Endothelial cell of umbilical vein (primary cell): ENCODE measurements at regions of chr4 and their contacts with region 1.

Region 1: DNA sequence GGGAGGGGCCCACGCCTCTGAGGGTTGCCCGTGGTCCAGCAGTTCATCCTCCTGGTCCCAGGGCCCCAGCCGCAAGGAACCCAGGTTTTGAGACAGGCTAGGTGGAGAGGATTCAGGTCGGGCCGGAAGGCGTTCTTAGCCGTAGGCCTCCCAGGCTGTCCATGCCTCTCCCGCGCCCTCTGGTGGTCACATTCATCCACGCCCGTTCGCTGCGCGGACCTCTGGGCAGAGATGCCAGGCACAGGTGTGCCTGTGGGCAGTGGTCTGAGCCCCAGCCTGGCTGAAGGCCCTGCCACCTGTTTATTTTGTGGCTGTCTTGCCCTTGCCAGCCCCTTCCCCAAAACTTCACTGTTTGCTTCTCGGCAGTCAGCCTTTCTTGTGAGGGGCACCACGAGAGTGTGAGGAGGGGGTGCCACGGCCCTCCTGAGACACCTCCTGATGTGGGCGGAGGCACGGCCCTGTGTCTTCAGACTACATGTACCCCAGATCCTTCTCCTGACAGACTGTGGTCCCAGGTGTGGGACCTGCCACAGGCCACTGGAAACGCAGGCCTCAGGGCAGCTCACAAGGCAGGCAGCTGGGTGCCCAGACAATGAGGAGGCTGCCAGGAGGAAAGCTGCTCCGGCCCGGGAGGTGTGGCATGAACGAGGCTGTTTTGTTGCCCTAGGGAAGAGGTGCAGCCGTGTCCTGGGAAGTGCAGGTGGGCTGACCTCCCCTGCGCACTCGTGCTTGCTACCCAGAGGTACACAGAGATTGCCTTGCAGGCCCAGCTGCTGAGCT is 5.0 kb downstream of the UVSSA start:
- DNase-seq: peak; percentile 63
- H3K4me3 ChIP-seq: no peak overlapping the region
- H3K27ac ChIP-seq: no peak overlapping the region
- H3K4me1 ChIP-seq: peaks cover 13% of the 10 kb centered on the region
- H3K27me3 ChIP-seq: no peaks in the 10 kb centered on the region
- CTCF ChIP-seq: peak; percentile 95 to 96
- POLR2A ChIP-seq: no peak

Region 2: DNA sequence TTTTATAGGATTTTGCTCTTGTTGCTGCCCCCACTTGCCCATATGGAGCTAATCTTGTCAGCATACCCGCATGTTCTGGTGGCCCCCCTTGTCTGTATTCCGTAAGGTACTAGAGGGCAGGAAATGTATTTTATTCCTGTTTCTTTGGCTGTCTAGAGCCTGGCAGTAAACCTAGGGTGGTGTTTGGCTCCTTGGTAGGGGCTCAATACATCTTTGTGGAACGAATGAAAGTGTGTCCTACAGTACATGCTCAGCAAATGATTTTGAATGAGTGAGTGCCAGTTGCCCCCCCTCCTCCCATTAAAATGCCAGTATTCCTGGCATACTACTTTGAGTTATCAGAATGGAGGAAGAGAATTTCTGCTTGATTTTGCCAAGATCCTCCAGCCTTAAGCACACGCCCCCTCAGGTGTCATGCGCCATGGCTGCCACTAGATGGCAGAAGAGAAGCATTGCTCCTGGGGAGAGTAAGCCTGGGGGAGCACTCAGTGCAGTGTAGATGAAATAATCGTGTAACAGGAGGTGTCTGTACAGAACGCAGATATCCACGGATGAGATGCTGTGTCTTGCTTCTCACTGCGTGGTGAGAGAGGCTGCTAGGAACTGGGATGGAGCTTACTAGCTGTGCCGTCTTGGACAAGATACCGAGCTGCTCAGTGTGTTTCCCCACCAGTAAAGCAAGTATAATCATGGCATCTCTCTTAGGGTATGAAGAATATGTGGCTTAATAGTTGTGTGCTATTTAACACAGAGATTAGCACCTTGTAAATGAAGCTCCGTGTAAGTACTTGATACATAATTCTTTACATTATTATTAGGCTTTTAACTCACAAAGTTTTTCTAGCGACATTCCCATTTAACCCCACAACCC is 221.5 kb before region 1 on chr4:
- CTCF ChIA-PET with region 1: interaction called, 15 read pairs
- POLR2A ChIA-PET with region 1: no interaction called
- dilution Hi-C with region 1: no loop called
- intact Hi-C with region 1: loop called (anchors 1 kb)
- DNase-seq: peak; percentile 88
- H3K4me3 ChIP-seq: no peak overlapping the region
- H3K27ac ChIP-seq: no peak overlapping the region
- H3K4me1 ChIP-seq: no peaks in the 10 kb centered on the region
- H3K27me3 ChIP-seq: peaks cover 2 to 3% of the 10 kb centered on the region in 2 experiments
- CTCF ChIP-seq: peak; percentile 94 to 98
- POLR2A ChIP-seq: no peak

Region 3: GRCh38 chr4:1200425-1201035 is 151.5 kb before region 1 on chr4:
- CTCF ChIA-PET with region 1: no interaction called
- POLR2A ChIA-PET with region 1: no interaction called
- dilution Hi-C with region 1: no loop called
- intact Hi-C with region 1: no loop called
- DNase-seq: no peak
- H3K4me3 ChIP-seq: no peak overlapping the region
- H3K27ac ChIP-seq: no peak overlapping the region
- H3K4me1 ChIP-seq: no peaks in the 10 kb centered on the region
- H3K27me3 ChIP-seq: no peaks in the 10 kb centered on the region
- CTCF ChIP-seq: no peak
- POLR2A ChIP-seq: no peak

Region 4: DNA sequence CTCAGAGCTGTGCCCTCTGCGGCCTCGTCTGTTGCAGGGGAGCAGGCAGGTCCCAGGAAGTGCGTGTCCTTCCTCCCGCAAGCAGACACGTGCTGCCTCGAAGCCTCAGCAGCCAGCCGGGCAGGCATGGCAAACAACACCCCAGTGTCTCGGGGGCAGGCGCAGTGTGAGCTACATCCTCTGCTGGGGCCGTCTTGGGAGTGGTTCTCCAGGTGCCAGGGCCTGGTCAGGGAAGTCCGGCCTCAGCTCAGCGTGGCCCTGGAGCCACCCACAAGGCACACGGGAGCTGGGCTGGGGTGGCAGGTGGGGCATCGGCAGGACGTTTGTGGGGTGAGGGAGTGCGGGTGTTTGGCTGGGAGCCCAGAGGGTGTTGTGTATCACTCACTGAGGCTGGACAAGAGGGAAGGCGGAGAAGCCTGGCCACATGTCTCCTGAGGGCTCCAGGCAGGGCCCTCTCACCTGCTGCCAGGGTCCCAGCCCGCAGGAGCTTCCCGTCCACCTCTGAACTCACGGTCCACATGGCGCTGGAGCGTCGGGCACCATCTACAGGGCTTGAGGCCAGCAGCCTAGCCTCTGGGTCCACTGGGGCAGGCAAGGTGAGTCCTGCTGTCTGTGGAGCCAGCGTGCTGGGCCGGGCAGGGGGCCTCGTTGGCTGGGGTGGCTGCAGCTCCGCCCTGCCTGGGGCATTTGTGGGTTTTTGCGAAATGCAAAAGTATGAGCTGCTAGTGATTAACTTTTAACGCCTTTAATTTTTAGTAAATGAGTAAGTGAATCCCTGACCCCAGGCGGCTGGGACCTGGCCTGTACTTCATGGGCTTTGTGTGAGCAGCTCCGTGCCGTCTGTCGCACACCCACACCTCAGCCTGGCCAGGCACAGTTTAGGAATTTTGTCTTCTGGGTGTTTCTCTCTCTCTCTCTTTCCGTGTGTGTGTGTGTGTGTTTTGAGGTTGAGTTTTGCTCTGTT is 22.4 kb before region 1 on chr4:
- CTCF ChIA-PET with region 1: no interaction called
- POLR2A ChIA-PET with region 1: no interaction called
- dilution Hi-C with region 1: no loop called
- intact Hi-C with region 1: no loop called
- DNase-seq: no peak
- H3K4me3 ChIP-seq: no peak overlapping the region
- H3K27ac ChIP-seq: no peak overlapping the region
- H3K4me1 ChIP-seq: no peaks in the 10 kb centered on the region
- H3K27me3 ChIP-seq: no peaks in the 10 kb centered on the region
- CTCF ChIP-seq: no peak
- POLR2A ChIP-seq: no peak

Region 5: GRCh38 chr4:1512738-1513660 is 161.0 kb after region 1 on chr4:
- CTCF ChIA-PET with region 1: interaction called, 30 read pairs
- POLR2A ChIA-PET with region 1: no interaction called
- dilution Hi-C with region 1: no loop called
- intact Hi-C with region 1: no loop called
- DNase-seq: peak; percentile 5
- H3K4me3 ChIP-seq: peak overlapping the region in 1 of 3 experiments; percentile 12
- H3K27ac ChIP-seq: no peak overlapping the region
- H3K4me1 ChIP-seq: no peaks in the 10 kb centered on the region
- H3K27me3 ChIP-seq: no peaks in the 10 kb centered on the region
- CTCF ChIP-seq: peak; percentile 60 to 65
- POLR2A ChIP-seq: no peak

Region 6: DNA sequence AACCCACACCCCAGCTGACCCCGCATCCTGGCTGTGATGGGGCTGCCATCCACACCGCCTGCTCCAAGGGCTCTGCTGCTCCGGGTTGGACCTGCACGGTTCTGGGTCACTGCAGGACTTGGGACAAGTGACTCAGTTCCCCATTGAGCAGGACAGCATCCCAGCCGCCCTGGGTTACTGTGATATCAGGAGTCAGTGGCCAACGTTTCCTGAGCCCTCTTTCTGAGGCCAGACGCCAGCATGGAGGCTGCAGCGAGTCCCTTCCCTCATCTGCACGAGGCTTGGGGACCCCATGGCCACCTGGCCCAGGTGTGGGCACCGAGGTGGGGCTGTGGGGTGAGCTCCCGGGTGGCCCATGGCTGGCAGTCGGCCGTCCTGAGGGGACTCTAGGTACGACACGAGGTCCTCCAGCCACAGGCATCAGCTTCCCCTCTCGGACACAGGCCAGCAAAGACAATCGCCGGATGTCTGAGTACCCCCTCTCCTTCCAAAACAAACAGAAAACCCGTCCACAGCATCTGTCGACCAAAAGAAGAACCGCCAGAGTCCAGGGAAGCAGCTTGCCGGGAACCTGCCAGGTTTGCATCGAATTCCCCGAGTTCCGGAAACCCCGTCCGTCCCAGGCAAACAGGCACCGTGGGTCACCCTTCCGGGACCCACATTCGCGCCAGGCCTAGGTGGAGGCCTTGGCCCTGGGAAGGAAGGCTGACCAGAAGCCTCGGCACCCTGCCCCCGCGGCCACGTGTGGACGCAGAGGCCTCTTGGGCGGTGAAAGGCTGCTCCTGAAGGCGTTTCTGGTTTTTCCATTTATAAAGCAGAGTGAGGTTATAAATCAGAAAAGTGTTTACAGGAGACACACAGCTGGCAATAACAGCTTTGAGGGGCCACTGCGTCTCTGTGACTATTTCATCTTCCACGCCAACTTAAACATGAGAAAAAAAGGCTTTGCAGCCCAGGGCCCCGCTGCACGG is 196.1 kb after region 1 on chr4:
- CTCF ChIA-PET with region 1: interaction called, 15 read pairs
- POLR2A ChIA-PET with region 1: no interaction called
- dilution Hi-C with region 1: no loop called
- intact Hi-C with region 1: loop called (anchors 2 kb)
- DNase-seq: peak; percentile 80
- H3K4me3 ChIP-seq: no peak overlapping the region
- H3K27ac ChIP-seq: no peak overlapping the region
- H3K4me1 ChIP-seq: peaks cover 8% of the 10 kb centered on the region
- H3K27me3 ChIP-seq: no peaks in the 10 kb centered on the region
- CTCF ChIP-seq: no peak
- POLR2A ChIP-seq: no peak

Region 7: DNA sequence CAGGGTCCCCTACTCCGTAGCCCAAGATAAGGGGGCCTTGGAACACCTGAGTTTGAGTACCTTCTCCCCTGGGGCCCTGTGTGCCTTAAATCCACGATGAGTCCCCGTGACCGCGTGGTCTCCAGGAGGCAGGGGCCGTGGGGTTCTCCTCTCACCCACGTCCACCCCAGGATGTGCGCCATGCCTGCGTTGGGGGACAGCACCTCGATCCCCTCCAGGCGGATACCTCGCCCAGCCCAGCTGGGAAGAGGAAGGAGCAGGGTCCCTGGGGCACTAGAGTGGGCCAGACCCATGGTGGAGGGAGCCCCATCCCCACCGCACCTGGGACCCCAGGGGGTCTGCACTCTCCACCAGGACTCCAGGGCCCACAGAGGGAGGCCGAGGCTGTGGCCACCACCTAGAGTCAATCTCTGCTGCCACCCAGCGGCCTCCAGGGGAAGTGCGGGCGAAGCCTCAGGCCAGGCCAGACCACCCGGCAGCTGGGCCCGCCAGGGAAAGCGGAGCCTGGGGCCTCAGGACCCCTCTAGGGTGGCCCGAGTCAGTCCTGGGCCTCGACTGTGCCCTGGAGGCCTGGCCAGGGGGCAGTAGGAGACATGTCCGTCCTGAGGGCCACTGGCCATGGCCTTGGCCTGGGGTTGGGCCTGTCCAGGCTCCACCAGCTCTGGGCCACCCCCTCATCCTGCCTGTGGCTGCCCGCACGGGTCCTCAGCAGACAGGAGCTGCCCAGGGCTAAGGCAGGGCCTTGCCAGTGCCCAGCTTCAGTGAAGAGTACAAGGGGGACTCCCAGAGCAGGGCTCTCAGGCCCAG is 277.1 kb after region 1 on chr4:
- CTCF ChIA-PET with region 1: interaction called, 53 read pairs
- POLR2A ChIA-PET with region 1: no interaction called
- dilution Hi-C with region 1: no loop called
- intact Hi-C with region 1: loop called (anchors 1 kb)
- DNase-seq: peak; percentile 22
- H3K4me3 ChIP-seq: no peak overlapping the region
- H3K27ac ChIP-seq: no peak overlapping the region
- H3K4me1 ChIP-seq: no peaks in the 10 kb centered on the region
- H3K27me3 ChIP-seq: no peaks in the 10 kb centered on the region
- CTCF ChIP-seq: peak; percentile 97 to 99
- POLR2A ChIP-seq: no peak

Region 8: DNA sequence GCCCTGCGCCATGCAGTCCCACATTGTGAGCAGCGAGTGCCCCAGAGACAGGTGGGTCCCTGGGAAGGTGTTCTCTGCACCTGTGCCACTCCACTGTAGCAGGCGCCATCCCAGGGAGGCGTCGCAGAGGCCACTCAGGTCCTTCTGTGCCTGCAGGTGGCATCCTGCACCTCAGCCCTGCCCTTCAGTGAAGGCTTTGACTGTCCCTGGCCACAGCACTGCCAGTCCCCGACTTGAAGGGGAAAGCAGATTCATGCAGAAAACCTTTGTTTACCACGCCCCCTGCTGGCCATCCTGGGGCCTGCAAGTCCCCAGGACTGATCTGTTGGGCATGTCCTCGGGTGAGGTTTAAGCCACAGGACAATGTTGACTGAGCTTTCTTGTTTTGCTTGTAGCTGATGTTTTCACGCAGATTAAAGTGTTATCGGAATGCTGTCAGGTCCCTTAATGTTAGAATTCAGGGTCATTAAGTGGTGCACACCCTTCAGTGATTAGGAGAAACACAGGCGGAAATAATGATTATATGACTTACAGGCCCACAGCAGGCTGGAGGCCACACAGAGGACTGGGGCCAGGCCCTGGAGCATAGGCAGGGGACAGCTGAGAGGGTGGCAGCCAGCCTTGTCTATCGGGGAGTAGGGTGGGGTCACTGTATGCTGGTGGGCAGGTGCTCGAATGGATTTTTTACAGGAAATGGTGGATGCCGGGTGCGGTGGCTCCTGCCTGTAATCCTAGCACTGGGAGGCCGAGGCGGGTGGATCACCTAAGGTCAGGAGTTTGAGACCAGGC is 374.3 kb after region 1 on chr4:
- CTCF ChIA-PET with region 1: no interaction called
- POLR2A ChIA-PET with region 1: no interaction called
- dilution Hi-C with region 1: no loop called
- intact Hi-C with region 1: loop called (anchors 1 kb)
- DNase-seq: peak; percentile 93
- H3K4me3 ChIP-seq: no peak overlapping the region
- H3K27ac ChIP-seq: peak overlapping the region; percentile 70
- H3K4me1 ChIP-seq: peaks cover 47% of the 10 kb centered on the region
- H3K27me3 ChIP-seq: no peaks in the 10 kb centered on the region
- CTCF ChIP-seq: peak; percentile 97 to 98
- POLR2A ChIP-seq: no peak